Ovary (tissue), 10 donors: ENCODE measurements at regions of chr20 and their contacts with region 1.

Region 1: GRCh38 chr20:38919683-38920082 is 6.5 kb upstream of the FAM83D start:
- DNase-seq: no peak
- H3K4me3 ChIP-seq: no peak overlapping the region
- H3K27ac ChIP-seq: no peak overlapping the region
- H3K4me1 ChIP-seq: no peaks in the 10 kb centered on the region
- H3K27me3 ChIP-seq: no peaks in the 10 kb centered on the region
- CTCF ChIP-seq: no peak
- EP300 ChIP-seq: no peak
- POLR2A ChIP-seq: no peak

Region 2: DNA sequence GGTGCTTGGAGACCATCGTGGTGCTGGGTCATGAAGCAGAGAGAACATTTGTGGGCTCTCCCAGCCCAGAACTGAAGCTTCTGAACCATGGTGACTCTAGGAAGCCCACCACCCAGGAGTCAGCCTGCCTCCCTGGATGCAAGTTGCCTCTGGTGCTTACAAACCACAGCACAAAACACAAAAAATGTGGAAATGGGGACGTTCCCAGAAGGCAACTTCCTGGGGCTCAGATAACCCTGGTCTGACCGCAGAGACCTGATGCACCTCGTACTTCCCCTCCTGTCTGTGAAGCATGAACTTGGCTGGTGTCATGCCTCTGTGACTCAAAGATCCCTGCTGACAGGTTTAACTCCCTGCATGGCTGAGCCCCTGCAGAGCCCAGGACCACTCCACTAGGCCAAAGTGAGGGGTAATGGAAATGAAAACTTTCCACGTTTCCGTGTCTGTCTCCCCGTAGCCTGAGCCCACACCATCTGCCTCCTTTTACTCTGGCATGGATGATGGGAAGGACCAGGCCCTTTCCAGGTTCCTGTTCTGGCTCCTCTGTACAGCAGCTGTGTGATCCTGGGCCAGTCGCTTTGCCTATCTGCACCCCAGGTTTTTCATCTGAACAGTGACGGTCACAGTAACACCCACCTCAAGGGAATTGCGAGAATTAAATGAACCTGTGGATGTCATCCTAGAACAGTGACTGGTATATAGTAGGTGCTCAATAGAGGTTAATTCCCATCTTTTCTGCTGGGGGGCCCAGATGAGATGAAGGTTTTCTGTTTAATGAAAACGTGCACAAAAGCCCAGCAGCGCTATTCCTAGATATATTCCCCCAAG is 56.4 kb before region 1 on chr20:
- intact Hi-C with region 1: no loop called
- DNase-seq: no peak
- H3K4me3 ChIP-seq: no peak overlapping the region
- H3K27ac ChIP-seq: no peak overlapping the region
- H3K4me1 ChIP-seq: no peaks in the 10 kb centered on the region
- H3K27me3 ChIP-seq: no peaks in the 10 kb centered on the region
- CTCF ChIP-seq: no peak
- EP300 ChIP-seq: no peak
- POLR2A ChIP-seq: no peak

Region 3: DNA sequence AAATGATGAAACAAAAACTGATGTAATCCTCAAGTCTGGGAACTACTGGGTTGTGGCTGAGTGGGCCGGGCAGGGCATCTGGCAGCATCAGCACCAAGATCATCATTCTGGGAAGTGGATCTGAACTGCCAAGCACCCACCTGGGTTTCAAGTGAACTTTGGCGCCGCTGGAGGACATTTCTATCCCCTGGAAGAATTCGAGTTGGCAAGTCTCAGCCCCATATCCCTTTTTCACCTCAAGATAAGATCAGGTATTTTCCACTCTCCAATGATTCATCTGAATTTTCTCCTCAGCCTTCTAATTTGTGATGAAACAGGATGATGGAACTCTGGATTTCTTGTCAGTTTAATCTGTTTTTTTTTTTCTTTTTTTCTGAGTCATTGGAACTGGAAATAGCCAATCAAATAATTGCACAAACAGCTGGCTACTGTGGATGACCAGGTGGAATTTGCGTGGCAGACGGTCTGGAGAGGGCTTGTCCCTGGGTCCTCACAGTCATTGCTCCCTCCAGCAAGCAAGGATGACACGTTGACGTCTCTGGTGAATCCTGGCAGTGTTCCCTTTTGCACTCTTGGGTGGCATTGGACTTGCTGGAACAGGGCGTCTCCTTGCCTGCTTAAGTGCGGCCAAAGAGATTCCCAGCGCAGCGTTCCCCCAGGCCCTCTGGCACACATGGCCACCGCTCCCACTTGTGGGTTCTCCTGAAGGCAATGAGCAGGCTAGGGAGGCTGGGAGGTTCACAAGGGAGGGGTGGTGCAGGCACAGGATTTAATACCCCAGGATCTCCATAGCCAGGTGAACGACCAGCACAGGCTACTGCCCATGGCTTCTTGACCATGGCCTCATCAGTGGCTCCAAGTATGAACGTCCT is 122.8 kb after region 1 on chr20:
- intact Hi-C with region 1: loop called in 1 of 4 experiments (anchors 5 kb)
- DNase-seq: no peak
- H3K4me3 ChIP-seq: no peak overlapping the region
- H3K27ac ChIP-seq: no peak overlapping the region
- H3K4me1 ChIP-seq: no peaks in the 10 kb centered on the region
- H3K27me3 ChIP-seq: no peaks in the 10 kb centered on the region
- CTCF ChIP-seq: no peak
- EP300 ChIP-seq: no peak
- POLR2A ChIP-seq: no peak